ENCODE measurements at regions of chr6 and their contacts with region 1.

Region 1: DNA sequence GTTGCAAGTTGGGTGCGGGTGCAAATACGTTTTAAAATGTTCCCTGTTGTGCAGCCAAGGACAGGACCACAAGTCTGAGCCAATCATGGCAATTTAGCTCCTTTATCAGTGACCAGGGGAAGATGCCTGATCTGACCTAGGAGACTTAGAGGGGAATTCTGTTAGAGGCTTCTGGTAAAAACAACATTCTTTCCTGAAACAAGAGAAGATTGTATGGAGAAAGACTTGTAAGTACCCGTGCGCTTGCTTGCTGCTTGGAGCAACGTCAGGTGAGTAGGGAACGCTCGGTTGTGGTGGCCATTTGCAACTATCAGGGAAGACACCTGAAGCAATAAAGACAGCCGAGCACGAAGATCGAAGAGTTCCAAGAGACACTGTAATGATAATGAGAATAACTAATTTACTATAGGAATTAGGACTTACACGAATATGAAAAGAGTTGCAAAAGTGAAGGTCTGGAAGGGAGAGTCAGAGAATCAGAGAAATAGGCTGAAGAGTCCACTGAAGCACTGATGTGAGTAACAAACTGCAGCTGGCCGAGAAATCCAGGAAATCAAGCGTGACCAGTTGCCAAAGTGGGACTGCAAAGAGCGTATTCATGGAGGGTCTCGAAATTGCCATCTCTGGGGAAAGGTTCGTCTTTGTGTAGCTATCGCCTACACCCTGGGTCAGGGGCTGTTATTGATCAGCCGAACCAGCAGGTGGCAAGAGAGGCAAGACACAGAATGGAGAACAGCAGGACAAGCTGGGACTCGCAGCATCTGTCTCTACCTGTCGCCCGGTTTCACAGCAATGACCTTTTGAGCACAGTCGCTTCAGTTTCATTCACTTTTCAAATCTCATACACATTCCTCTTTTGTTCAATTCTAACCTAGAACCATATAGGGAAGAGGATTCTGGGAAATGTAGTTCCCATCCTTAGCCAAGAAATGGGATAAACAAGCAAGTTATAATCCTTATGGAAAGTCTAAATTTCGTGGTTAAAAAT is 26.1 kb downstream of the LOC128125822 start:
- DNase-seq: peak; percentile 56 to 85 (median 68)
- ATAC-seq: peak; percentile 97 to 100 (median 100)
- H3K4me3 ChIP-seq: peak overlapping the region; percentile 50 to 73
- H3K4me3 Mint-ChIP-seq: peak overlapping the region; percentile 74 to 80 (median 79)
- H3K27ac ChIP-seq: no peak overlapping the region
- H3K27ac Mint-ChIP-seq: no peak overlapping the region
- H3K4me1 ChIP-seq: peaks cover 0 to 9% of the 10 kb centered on the region in 2 experiments
- H3K4me1 Mint-ChIP-seq: peaks cover 16 to 18% (median 16%) of the 10 kb centered on the region in 3 donors
- H3K27me3 ChIP-seq: peaks cover 0 to 7% of the 10 kb centered on the region in 2 experiments
- H3K27me3 Mint-ChIP-seq: peaks cover 0 to 8% of the 10 kb centered on the region in 2 donors

Region 2: GRCh38 chr6:63307581-63308246 is 290.6 kb before region 1 on chr6:
- CTCF ChIA-PET with region 1: no interaction called
- POLR2A ChIA-PET with region 1: no interaction called
- DNase-seq: peak in 1 of 35 experiments; percentile 3
- ATAC-seq: no peak
- H3K4me3 ChIP-seq: no peak overlapping the region
- H3K4me3 Mint-ChIP-seq: no peak overlapping the region
- H3K27ac ChIP-seq: no peak overlapping the region
- H3K27ac Mint-ChIP-seq: no peak overlapping the region
- H3K4me1 ChIP-seq: no peaks in the 10 kb centered on the region
- H3K4me1 Mint-ChIP-seq: no peaks in the 10 kb centered on the region
- H3K27me3 ChIP-seq: no peaks in the 10 kb centered on the region
- H3K27me3 Mint-ChIP-seq: peaks cover 3% of the 10 kb centered on the region in 2 donors

Region 3: DNA sequence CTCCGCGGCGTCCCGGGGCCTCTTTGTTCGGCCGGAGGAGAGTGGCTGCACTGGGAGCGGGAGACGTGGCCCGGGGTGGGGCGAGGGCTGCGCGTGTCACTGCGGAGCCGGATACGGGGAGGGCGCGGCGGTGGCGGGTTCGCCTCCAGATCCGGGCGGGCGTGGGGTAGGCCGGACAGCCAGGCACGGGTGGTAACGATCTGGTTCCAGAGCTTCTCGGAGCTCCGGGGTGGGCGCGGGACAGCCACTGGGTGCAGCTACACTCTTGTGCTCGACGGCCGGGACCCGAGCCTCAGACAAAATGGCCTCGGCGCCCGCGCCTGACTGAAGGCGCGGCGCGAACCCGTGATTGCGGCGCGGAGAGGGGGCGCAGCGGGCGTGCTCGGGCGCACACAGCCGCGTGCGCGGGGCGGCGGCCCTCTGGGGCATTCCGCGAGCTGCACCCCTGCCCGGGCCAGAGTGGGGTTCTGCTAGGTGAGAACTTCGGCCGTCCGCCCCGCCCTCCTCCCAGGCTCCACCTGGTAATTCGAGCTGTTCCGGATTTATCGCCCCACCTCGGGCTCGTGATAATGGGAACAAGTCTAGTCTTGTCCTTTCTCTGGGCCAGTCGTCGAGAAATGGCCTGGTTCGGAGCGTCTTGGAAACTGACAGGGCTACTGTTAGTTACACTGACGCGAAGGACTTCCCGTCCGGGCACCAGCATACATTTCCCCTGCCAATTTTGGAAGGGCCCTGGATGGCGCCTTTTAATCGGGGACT is 25.0 kb before region 1 on chr6:
- CTCF ChIA-PET with region 1: interaction called in 1 of 2 experiments, 14 read pairs
- POLR2A ChIA-PET with region 1: interaction called in 1 of 2 experiments, 3 read pairs
- DNase-seq: peak; percentile 28 to 78 (median 56)
- ATAC-seq: peak; percentile 13 to 55 (median 44)
- H3K4me3 ChIP-seq: peak overlapping the region; percentile 73 to 78
- H3K4me3 Mint-ChIP-seq: peak overlapping the region; percentile 90 to 93 (median 91)
- H3K27ac ChIP-seq: peak overlapping the region; percentile 97
- H3K27ac Mint-ChIP-seq: peak overlapping the region; percentile 96
- H3K4me1 ChIP-seq: peaks cover 9 to 13% of the 10 kb centered on the region in 2 experiments
- H3K4me1 Mint-ChIP-seq: peaks cover 29 to 44% (median 40%) of the 10 kb centered on the region in 3 donors
- H3K27me3 ChIP-seq: no peaks in the 10 kb centered on the region
- H3K27me3 Mint-ChIP-seq: no peaks in the 10 kb centered on the region

Region 4: GRCh38 chr6:63584125-63584514 is 14.2 kb before region 1 on chr6:
- CTCF ChIA-PET with region 1: interaction called, 5 to 10 read pairs
- POLR2A ChIA-PET with region 1: interaction called in 1 of 2 experiments, 3 read pairs
- DNase-seq: no peak
- ATAC-seq: peak in 1 of 4 experiments; percentile 2
- H3K4me3 ChIP-seq: no peak overlapping the region
- H3K4me3 Mint-ChIP-seq: no peak overlapping the region
- H3K27ac ChIP-seq: no peak overlapping the region
- H3K27ac Mint-ChIP-seq: no peak overlapping the region
- H3K4me1 ChIP-seq: no peaks in the 10 kb centered on the region
- H3K4me1 Mint-ChIP-seq: no peaks in the 10 kb centered on the region
- H3K27me3 ChIP-seq: no peaks in the 10 kb centered on the region
- H3K27me3 Mint-ChIP-seq: peaks cover 0 to 2% of the 10 kb centered on the region in 2 donors

Region 5: DNA sequence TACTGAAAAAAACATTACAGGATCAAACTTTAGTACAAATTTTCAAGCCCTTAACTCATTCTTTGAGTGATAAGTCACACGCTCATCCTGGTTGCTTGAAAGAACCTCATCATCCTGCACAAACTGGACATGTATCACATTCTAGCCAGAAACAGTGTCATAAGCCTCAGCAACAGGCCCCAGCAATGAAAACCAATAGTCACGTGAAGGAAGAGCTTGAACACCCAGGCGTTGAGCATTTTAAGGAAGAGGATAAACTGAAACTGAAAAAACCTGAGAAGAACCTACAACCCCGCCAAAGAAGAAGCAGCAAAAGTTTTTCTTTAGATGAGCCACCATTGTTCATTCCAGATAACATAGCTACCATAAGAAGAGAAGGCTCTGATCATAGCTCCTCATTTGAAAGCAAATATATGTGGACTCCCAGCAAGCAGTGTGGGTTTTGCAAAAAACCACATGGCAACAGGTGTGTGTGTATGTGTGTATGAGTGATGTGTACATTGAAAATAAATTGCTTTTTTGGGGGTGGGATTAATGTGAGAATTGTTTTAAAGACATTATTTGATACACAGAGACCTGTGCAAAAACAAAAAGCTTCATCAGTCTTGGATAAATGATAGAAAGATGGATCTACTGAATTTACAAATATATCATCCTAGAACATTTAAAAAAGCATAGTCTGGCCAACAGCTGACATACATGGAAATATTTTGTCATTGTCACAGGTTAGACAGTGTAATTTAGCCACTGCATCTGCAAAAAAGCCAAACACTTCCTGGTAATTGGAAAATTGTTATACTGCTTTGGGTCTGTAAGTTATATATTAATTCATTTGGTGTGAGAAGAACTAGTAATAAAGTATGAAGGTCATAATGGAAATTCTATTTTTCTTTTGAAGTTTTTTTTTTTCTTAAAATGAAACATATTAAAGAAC is 87.4 kb after region 1 on chr6:
- CTCF ChIA-PET with region 1: interaction called, 5 to 11 read pairs
- POLR2A ChIA-PET with region 1: no interaction called
- DNase-seq: no peak
- ATAC-seq: no peak
- H3K4me3 ChIP-seq: no peak overlapping the region
- H3K4me3 Mint-ChIP-seq: no peak overlapping the region
- H3K27ac ChIP-seq: no peak overlapping the region
- H3K27ac Mint-ChIP-seq: peak overlapping the region in 1 of 2 donors; percentile 4
- H3K4me1 ChIP-seq: peaks cover 0 to 2% of the 10 kb centered on the region in 2 experiments
- H3K4me1 Mint-ChIP-seq: peaks cover 40 to 54% (median 48%) of the 10 kb centered on the region in 3 donors
- H3K27me3 ChIP-seq: no peaks in the 10 kb centered on the region
- H3K27me3 Mint-ChIP-seq: no peaks in the 10 kb centered on the region

Region 6: GRCh38 chr6:63764318-63764916 is 166.1 kb after region 1 on chr6:
- CTCF ChIA-PET with region 1: interaction called, 25 to 137 read pairs
- POLR2A ChIA-PET with region 1: no interaction called
- DNase-seq: peak in 1 of 35 experiments; percentile 74
- ATAC-seq: no peak
- H3K4me3 ChIP-seq: no peak overlapping the region
- H3K4me3 Mint-ChIP-seq: no peak overlapping the region
- H3K27ac ChIP-seq: no peak overlapping the region
- H3K27ac Mint-ChIP-seq: no peak overlapping the region
- H3K4me1 ChIP-seq: no peaks in the 10 kb centered on the region
- H3K4me1 Mint-ChIP-seq: no peaks in the 10 kb centered on the region
- H3K27me3 ChIP-seq: no peaks in the 10 kb centered on the region
- H3K27me3 Mint-ChIP-seq: peaks cover 0 to 7% of the 10 kb centered on the region in 2 donors

Region 7: GRCh38 chr6:63802606-63803206 is 204.4 kb after region 1 on chr6:
- CTCF ChIA-PET with region 1: interaction called, 3 to 15 read pairs
- POLR2A ChIA-PET with region 1: no interaction called
- DNase-seq: peak in 1 of 35 experiments; percentile 5
- ATAC-seq: no peak
- H3K4me3 ChIP-seq: no peak overlapping the region
- H3K4me3 Mint-ChIP-seq: no peak overlapping the region
- H3K27ac ChIP-seq: no peak overlapping the region
- H3K27ac Mint-ChIP-seq: no peak overlapping the region
- H3K4me1 ChIP-seq: no peaks in the 10 kb centered on the region
- H3K4me1 Mint-ChIP-seq: no peaks in the 10 kb centered on the region
- H3K27me3 ChIP-seq: no peaks in the 10 kb centered on the region
- H3K27me3 Mint-ChIP-seq: peaks cover 5 to 7% of the 10 kb centered on the region in 2 donors